ENCODE measurements at regions of chr5 and their contacts with region 1.

Region 1: DNA sequence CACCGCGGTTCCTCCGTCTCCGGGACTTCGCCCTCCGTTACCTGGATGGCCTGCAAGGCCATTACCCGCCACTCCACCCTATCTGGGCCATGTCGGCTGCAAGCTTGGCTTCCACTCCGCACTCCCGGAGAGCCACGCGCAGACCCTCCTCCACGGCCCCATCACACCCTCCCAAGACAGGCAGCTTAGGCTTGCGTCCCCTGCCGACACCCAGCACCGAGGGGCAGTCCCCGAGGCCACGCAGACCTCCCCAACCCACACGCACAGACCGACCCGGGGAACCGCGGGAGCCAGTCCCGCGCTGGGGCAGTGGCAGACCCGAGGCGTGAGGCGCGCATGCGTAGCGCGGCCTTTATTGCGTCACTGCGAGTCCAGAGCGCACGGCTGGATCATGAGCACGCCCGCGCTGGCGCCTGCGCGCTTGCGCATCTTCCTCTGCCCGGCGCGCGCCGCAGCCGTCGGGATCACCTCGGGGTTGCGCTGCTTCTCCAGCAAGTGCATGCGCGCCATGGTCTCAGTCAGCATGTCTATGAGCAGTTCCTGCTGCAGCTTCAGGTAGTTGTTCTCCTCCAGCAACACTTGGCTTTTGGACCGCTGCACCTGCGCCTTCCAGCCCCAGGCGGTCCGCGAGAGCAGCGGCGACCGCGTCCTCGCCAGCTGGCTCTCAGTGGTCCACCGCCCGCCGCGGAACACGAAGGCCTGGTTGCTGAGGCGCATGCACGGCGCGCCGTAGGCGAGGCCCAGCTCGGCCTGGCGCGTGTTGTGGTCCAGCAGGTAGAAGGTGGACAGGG is 2.4 kb downstream of the CBY3 start:
- DNase-seq: peak; percentile 87 to 95 (median 92)
- ATAC-seq: peak; percentile 85 to 87
- H3K4me3 Mint-ChIP-seq: peak overlapping the region; percentile 94 to 100 (median 96)
- H3K27ac Mint-ChIP-seq: peak overlapping the region; percentile 93 to 99 (median 97)
- H3K4me1 Mint-ChIP-seq: peaks cover 17 to 50% (median 31%) of the 10 kb centered on the region in 4 donors
- H3K27me3 Mint-ChIP-seq: no peaks in the 10 kb centered on the region

Region 2: DNA sequence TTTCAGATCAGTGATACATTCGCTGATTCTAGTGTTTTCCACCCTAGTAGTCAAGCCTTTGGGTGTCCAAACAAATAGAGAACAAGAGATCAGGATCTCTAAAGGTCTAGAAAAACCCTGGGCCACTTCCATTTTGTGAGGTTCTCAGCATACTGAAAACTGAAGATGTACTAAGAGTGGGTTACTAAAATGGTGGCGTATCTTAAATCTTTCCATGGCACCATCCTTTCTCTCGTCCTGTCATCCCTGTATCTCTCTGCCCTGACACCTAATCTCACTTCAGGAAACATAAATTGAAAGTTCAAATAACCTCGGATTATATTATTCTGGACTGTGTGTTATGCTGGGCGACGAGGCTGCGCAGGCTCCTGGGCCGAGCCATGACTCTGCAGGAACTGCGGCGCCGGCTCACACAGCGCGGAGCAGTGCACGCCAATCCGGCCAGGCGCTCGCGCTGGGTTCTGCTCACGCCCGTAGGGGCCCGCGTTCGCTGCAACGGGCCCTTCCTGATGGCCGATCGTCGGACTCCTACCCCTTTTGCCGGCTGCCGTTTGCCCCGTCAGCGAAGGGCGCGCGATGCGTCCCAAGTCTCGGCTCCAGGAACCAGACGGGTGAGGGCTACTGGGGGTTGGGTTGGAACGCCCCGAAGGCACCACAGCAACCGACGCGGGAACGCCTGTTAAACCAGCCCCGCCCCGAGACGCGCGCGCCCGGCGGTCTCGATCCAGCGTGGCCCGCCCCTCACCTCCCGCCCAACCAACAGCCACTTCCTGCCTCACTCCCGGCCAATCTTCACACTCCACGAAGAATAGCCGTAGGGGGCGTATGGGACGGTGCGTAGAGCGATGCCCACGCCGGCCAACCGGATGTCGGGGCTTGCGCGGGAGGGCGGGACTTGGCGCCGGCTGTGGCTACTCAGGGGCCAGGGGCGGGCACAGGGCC is 19.8 kb after region 1 on chr5:
- POLR2A ChIA-PET with region 1: interaction called, 39 read pairs
- DNase-seq: peak; percentile 96 to 99 (median 98)
- ATAC-seq: peak; percentile 89
- H3K4me3 Mint-ChIP-seq: peak overlapping the region; percentile 90 to 99 (median 97)
- H3K27ac Mint-ChIP-seq: peak overlapping the region; percentile 94 to 99 (median 99)
- H3K4me1 Mint-ChIP-seq: peaks cover 17 to 54% (median 43%) of the 10 kb centered on the region in 4 donors
- H3K27me3 Mint-ChIP-seq: no peaks in the 10 kb centered on the region

Region 3: GRCh38 chr5:179732417-179732917 is 54.0 kb after region 1 on chr5 and contains the start of gene MAML1:
- POLR2A ChIA-PET with region 1: interaction called, 35 read pairs
- DNase-seq: peak; percentile 95 to 100 (median 99)
- ATAC-seq: peak; percentile 94 to 95
- H3K4me3 Mint-ChIP-seq: peak within 1 kb of the TSS; percentile 77 to 96 (median 94)
- H3K27ac Mint-ChIP-seq: peak within 1 kb of the TSS; percentile 91 to 97 (median 96)
- H3K4me1 Mint-ChIP-seq: peaks cover 9 to 50% (median 39%) of the 10 kb centered on the region in 4 donors
- H3K27me3 Mint-ChIP-seq: no peaks in the 10 kb centered on the region
- polyA plus RNA-seq, gene MAML1: 2.8 to 9.6 (median 3.3) TPM